Colonic mucosa (tissue), 4 donors: ENCODE measurements at regions of chr2 and their contacts with region 1.

Region 1: GRCh38 chr2:113138428-113139322 is 11.3 kb downstream of the IL1RN start:
- DNase-seq: peak; percentile 77
- H3K4me3 ChIP-seq: no peak overlapping the region
- H3K27ac ChIP-seq: no peak overlapping the region
- H3K4me1 ChIP-seq: no peaks in the 10 kb centered on the region
- H3K27me3 ChIP-seq: no peaks in the 10 kb centered on the region
- CTCF ChIP-seq: peak; percentile 86

Region 2: DNA sequence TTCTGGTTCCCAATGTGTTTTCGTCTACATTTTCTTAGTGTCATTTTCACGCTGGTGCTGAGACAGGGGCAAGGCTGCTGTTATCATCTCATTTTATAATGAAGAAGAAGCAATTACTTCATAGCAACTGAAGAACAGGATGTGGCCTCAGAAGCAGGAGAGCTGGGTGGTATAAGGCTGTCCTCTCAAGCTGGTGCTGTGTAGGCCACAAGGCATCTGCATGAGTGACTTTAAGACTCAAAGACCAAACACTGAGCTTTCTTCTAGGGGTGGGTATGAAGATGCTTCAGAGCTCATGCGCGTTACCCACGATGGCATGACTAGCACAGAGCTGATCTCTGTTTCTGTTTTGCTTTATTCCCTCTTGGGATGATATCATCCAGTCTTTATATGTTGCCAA is 153.6 kb before region 1 on chr2:
- intact Hi-C with region 1: no loop called
- DNase-seq: no peak
- H3K4me3 ChIP-seq: no peak overlapping the region
- H3K27ac ChIP-seq: no peak overlapping the region
- H3K4me1 ChIP-seq: no peaks in the 10 kb centered on the region
- H3K27me3 ChIP-seq: no peaks in the 10 kb centered on the region
- CTCF ChIP-seq: no peak

Region 3: GRCh38 chr2:113080134-113080533 is 58.5 kb before region 1 on chr2:
- intact Hi-C with region 1: loop called (anchors 10 kb)
- DNase-seq: peak; percentile 23
- H3K4me3 ChIP-seq: no peak overlapping the region
- H3K27ac ChIP-seq: no peak overlapping the region
- H3K4me1 ChIP-seq: no peaks in the 10 kb centered on the region
- H3K27me3 ChIP-seq: no peaks in the 10 kb centered on the region
- CTCF ChIP-seq: peak; percentile 64